B cell (primary cell): ENCODE measurements at regions of chr1 and their contacts with region 1.

Region 1: GRCh38 chr1:225977937-225978748 is 21.0 kb downstream of the SDE2 start:
- DNase-seq: peak; percentile 71
- ATAC-seq: peak; percentile 80
- H3K4me3 ChIP-seq: no peak overlapping the region
- H3K4me3 Mint-ChIP-seq: peak overlapping the region; percentile 67
- H3K27ac ChIP-seq: peak overlapping the region; percentile 27 to 38
- H3K27ac Mint-ChIP-seq: peak overlapping the region; percentile 83
- H3K4me1 ChIP-seq: peaks cover 16 to 23% of the 10 kb centered on the region in 2 donors
- H3K4me1 Mint-ChIP-seq: peaks cover 25% of the 10 kb centered on the region
- H3K27me3 ChIP-seq: no peaks in the 10 kb centered on the region
- H3K27me3 Mint-ChIP-seq: no peaks in the 10 kb centered on the region
- CTCF ChIP-seq: peak; percentile 5

Region 2: GRCh38 chr1:225318706-225319575 is 659.2 kb before region 1 on chr1:
- CTCF ChIA-PET with region 1: interaction called, 26 read pairs
- POLR2A ChIA-PET with region 1: interaction called, 18 read pairs
- intact Hi-C with region 1: no loop called
- DNase-seq: peak; percentile 46
- ATAC-seq: peak; percentile 33
- H3K4me3 ChIP-seq: no peak overlapping the region
- H3K4me3 Mint-ChIP-seq: no peak overlapping the region
- H3K27ac ChIP-seq: no peak overlapping the region
- H3K27ac Mint-ChIP-seq: no peak overlapping the region
- H3K4me1 ChIP-seq: no peaks in the 10 kb centered on the region
- H3K4me1 Mint-ChIP-seq: no peaks in the 10 kb centered on the region
- H3K27me3 ChIP-seq: peaks cover 0 to 5% (median 0%) of the 10 kb centered on the region in 4 experiments
- H3K27me3 Mint-ChIP-seq: peaks cover 7% of the 10 kb centered on the region
- CTCF ChIP-seq: peak; percentile 79

Region 3: DNA sequence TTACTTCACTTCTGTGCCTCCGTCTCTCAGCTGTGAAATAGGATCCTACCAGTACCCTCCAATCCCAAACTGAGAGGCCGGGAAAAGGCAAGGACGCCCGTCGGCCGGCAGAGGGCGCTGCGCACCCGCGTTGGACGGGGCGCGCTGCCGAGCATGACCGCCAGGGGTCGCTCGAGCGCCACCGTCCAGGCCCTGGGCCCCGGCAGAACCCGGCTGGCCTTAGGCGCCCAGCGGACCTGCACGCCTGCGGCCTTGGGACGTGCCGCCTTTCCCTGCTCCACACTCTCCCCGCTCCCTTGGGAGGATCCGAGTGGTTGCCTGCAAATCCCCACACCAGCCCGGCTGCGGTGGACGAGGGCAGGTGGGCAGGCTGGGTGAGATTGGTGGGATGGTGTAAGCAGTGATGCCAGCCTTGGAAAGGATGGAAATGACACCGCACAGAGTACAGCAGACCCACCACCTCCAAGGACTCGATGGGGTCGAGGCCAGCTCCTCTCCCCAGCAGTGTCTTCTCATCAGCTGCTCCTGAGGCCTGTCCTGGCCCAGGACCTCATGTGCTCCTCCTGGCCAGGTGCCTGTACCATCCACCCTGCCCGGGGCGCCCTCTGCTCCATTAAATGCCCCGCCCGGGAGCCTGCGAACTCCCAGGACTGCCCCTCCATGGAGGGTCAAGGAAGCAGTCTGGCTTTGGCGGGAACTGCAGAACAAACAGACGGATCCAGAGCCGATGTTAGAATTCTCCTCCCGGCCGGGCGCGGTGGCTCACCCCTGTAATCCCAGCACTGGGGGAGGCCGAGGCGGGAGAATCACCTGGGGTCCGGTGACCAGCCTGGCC is 502.9 kb before region 1 on chr1:
- CTCF ChIA-PET with region 1: interaction called, 86 read pairs
- POLR2A ChIA-PET with region 1: no interaction called
- intact Hi-C with region 1: loop called (anchors 1 kb)
- DNase-seq: peak; percentile 84
- ATAC-seq: peak; percentile 92
- H3K4me3 ChIP-seq: no peak overlapping the region
- H3K4me3 Mint-ChIP-seq: no peak overlapping the region
- H3K27ac ChIP-seq: no peak overlapping the region
- H3K27ac Mint-ChIP-seq: peak overlapping the region; percentile 32
- H3K4me1 ChIP-seq: peaks cover 32 to 44% of the 10 kb centered on the region in 2 donors
- H3K4me1 Mint-ChIP-seq: peaks cover 38% of the 10 kb centered on the region
- H3K27me3 ChIP-seq: no peaks in the 10 kb centered on the region
- H3K27me3 Mint-ChIP-seq: no peaks in the 10 kb centered on the region
- CTCF ChIP-seq: peak; percentile 100

Region 4: DNA sequence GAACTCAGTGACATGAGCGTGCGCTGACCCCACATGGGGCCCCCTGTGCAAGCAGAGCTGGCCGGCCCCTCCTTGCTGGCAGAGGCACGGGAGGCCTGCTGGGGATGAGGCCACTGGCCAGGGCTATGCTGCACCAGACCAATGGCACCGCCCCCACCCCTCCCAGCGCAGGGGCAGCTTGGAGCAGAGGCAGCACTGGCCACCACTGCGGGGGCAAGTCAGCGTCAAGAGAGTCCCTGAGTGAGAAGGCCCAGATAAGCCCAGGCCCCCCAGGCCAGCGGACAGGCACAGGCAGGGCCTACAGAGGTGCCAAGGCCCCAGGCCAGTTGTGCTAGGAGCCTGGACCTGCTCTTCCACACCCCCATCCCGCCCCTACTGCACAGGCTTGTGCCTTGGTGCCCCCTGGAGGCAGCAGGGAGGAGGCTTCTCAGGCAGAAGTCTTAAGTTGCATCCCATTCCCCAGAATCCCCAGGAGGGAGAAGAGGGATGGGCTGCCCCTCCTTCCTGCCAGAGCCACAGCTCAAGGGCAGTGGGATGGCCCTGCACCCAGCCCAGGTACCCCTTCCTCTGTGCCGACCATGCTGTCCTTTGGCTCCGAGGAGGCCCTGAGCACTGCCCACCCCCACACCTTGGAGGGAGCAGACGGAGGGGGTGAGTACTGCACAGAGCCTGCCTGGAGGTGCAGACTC is 132.4 kb before region 1 on chr1:
- CTCF ChIA-PET with region 1: no interaction called
- POLR2A ChIA-PET with region 1: no interaction called
- intact Hi-C with region 1: loop called (anchors 5 kb)
- DNase-seq: no peak
- ATAC-seq: no peak
- H3K4me3 ChIP-seq: no peak overlapping the region
- H3K4me3 Mint-ChIP-seq: no peak overlapping the region
- H3K27ac ChIP-seq: peak overlapping the region in 1 of 2 donors; percentile 87
- H3K27ac Mint-ChIP-seq: peak overlapping the region; percentile 98
- H3K4me1 ChIP-seq: peaks cover 41 to 47% of the 10 kb centered on the region in 2 donors
- H3K4me1 Mint-ChIP-seq: peaks cover 47% of the 10 kb centered on the region
- H3K27me3 ChIP-seq: no peaks in the 10 kb centered on the region
- H3K27me3 Mint-ChIP-seq: no peaks in the 10 kb centered on the region
- CTCF ChIP-seq: no peak

Region 5: DNA sequence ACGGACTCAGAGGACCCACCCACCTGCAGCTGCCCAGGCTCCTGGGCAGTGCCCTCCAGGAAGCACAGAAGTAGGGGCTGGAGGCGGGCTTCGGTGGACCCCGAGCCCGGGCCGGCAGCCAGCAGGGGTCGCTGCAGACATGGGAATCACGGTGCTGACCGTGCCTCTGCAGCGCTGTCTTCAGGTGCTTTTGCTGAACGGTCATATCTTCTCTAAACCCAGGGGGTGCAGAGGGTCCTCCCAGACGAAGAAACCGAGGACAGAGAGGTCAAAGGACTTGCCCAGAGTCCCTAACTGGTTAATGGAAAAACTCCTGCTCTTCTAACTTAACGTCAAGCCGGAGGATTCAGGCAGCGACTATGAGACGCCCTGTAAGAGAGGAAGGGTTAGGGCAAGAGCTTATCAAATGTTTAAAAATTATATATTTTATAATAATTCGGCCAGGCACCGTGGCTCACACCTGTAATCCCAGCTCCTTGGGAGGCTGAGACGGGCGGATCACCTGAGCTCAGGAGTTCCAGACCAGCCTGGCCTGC is 15.6 kb before region 1 on chr1:
- CTCF ChIA-PET with region 1: interaction called, 11 read pairs
- POLR2A ChIA-PET with region 1: no interaction called
- intact Hi-C with region 1: no loop called
- DNase-seq: peak; percentile 67
- ATAC-seq: peak; percentile 63
- H3K4me3 ChIP-seq: no peak overlapping the region
- H3K4me3 Mint-ChIP-seq: no peak overlapping the region
- H3K27ac ChIP-seq: no peak overlapping the region
- H3K27ac Mint-ChIP-seq: no peak overlapping the region
- H3K4me1 ChIP-seq: peaks cover 0 to 5% of the 10 kb centered on the region in 2 donors
- H3K4me1 Mint-ChIP-seq: peaks cover 2% of the 10 kb centered on the region
- H3K27me3 ChIP-seq: peaks cover 0 to 7% (median 0%) of the 10 kb centered on the region in 4 experiments
- H3K27me3 Mint-ChIP-seq: no peaks in the 10 kb centered on the region
- CTCF ChIP-seq: peak; percentile 75

Region 6: DNA sequence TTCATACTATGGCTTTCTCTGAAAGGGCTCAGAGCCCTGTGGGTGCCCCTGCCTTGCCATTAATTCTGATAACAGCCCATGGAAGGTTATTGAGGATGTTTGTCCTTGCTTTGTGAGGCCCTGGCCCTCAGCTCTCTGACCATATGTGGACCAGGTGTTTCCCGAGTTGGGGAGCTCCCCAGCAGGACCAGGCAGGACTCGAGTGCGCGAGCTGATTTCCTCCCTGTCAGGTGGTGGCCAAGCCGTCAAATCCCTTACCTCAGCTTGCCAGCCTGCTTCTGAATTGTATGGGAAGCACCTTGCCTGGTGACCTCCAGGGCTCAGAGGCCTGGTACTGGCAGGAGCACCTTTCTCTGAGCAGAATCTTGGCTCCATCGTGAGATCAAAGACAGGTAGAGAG is 38.9 kb after region 1 on chr1:
- CTCF ChIA-PET with region 1: no interaction called
- POLR2A ChIA-PET with region 1: no interaction called
- intact Hi-C with region 1: no loop called
- DNase-seq: no peak
- ATAC-seq: no peak
- H3K4me3 ChIP-seq: no peak overlapping the region
- H3K4me3 Mint-ChIP-seq: no peak overlapping the region
- H3K27ac ChIP-seq: no peak overlapping the region
- H3K27ac Mint-ChIP-seq: no peak overlapping the region
- H3K4me1 ChIP-seq: no peaks in the 10 kb centered on the region
- H3K4me1 Mint-ChIP-seq: peaks cover 4% of the 10 kb centered on the region
- H3K27me3 ChIP-seq: no peaks in the 10 kb centered on the region
- H3K27me3 Mint-ChIP-seq: no peaks in the 10 kb centered on the region
- CTCF ChIP-seq: no peak

Region 7: DNA sequence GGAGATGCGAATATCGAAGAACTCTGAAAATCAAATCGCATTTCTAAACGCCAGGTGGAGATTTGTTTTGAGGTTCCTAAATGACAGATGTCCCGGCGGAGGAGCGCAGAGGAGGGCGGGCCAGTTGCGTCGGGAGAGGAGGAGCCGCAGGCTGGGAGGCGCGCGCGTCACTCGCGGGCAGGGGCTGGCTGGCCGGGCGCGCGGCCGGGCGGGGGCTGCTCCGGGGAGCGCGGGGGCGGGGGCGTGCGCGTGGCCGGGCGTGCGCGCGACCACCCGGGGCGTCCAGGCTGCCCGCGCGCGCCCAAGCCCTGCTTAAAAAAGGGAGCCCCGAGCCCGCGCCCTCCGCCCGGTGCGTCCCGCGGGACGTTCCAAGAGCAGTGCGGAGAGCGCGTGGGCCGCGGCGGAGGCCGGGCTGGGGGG is 131.7 kb after region 1 on chr1:
- CTCF ChIA-PET with region 1: interaction called, 15 read pairs
- POLR2A ChIA-PET with region 1: interaction called, 3 read pairs
- intact Hi-C with region 1: no loop called
- DNase-seq: peak; percentile 93
- ATAC-seq: peak; percentile 64
- H3K4me3 ChIP-seq: peak overlapping the region in 4 of 5 experiments; percentile 57 to 85 (median 72)
- H3K4me3 Mint-ChIP-seq: peak overlapping the region; percentile 96
- H3K27ac ChIP-seq: peak overlapping the region; percentile 96 to 99
- H3K27ac Mint-ChIP-seq: peak overlapping the region; percentile 98
- H3K4me1 ChIP-seq: peaks cover 36 to 44% of the 10 kb centered on the region in 2 donors
- H3K4me1 Mint-ChIP-seq: peaks cover 42% of the 10 kb centered on the region
- H3K27me3 ChIP-seq: no peaks in the 10 kb centered on the region
- H3K27me3 Mint-ChIP-seq: no peaks in the 10 kb centered on the region
- CTCF ChIP-seq: no peak